AG04449 (cell line): ENCODE measurements at regions of chr1 and their contacts with region 1.

Region 1: GRCh38 chr1:7042322-7043190 is 257.3 kb downstream of the CAMTA1 start:
- DNase-seq: no peak
- H3K4me3 ChIP-seq: no peak overlapping the region
- CTCF ChIP-seq: peak; percentile 17

Region 2: GRCh38 chr1:6523566-6523965 is 519.0 kb before region 1 on chr1:
- CTCF ChIA-PET with region 1: no interaction called
- POLR2A ChIA-PET with region 1: no interaction called
- DNase-seq: no peak
- H3K4me3 ChIP-seq: no peak overlapping the region
- CTCF ChIP-seq: peak; percentile 52

Region 3: GRCh38 chr1:6547301-6547700 is 495.3 kb before region 1 on chr1:
- CTCF ChIA-PET with region 1: no interaction called
- POLR2A ChIA-PET with region 1: no interaction called
- DNase-seq: no peak
- H3K4me3 ChIP-seq: no peak overlapping the region
- CTCF ChIP-seq: no peak

Region 4: DNA sequence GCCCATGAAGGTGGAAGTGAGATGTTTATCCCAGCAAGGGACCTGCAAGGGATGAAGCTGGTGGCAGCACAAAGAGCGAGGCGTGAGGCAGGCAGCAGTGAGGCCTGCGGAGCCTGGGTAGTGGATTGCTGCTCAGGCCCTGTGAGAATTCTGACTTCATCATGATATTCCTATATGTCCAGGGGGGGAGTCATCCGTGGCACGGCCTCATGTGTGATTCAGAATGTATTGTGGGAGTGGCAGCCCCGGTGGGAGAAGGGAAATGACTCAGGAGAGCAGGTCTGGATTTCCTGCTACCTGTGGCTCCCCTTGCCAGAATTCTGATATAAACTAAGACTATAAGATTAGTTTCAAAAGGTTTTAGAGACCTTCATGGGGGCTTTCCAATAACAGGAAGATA is 16.4 kb before region 1 on chr1:
- CTCF ChIA-PET with region 1: interaction called, 35 read pairs
- POLR2A ChIA-PET with region 1: no interaction called
- DNase-seq: no peak
- H3K4me3 ChIP-seq: no peak overlapping the region
- CTCF ChIP-seq: no peak

Region 5: GRCh38 chr1:7070389-7071029 is 28.0 kb after region 1 on chr1:
- CTCF ChIA-PET with region 1: interaction called, 50 read pairs
- POLR2A ChIA-PET with region 1: no interaction called
- DNase-seq: peak; percentile 1
- H3K4me3 ChIP-seq: peak overlapping the region; percentile 44
- CTCF ChIP-seq: peak; percentile 96

Region 6: DNA sequence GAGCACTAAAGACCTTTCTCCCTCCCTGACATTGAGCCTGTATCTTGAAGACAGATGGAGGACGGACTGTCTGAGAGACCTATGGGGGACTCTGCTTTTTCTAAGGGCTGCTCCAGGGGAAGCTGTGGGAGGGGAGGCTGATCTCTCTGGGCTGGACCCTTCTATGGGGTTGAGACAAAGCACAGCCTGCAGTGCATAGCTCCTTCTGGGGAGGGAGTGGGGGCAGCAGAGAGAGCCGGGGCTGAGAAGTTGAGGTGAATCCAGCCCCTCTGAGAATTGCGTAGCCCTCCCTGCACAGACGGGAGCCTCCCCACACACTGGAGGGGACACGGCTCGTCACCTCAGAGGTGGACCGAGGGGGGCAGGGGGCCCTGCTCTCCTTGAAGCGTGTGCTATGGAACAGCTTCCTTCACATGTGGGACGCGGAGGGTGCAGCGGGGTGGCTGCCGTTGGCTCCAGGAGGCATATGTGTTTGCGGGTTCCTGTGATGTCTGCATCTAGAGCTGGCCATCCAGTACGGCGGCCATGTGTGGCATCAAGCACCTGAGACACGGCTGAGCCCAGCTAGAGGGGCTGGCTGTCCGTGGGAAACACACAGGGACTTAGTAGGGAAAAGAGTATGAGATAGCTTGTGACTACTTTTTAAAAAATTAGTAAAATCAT is 41.8 kb after region 1 on chr1:
- CTCF ChIA-PET with region 1: interaction called, 14 read pairs
- POLR2A ChIA-PET with region 1: no interaction called
- DNase-seq: no peak
- H3K4me3 ChIP-seq: no peak overlapping the region
- CTCF ChIP-seq: no peak

Region 7: GRCh38 chr1:7218210-7218832 is 175.8 kb after region 1 on chr1:
- CTCF ChIA-PET with region 1: interaction called, 46 read pairs
- POLR2A ChIA-PET with region 1: no interaction called
- DNase-seq: no peak
- H3K4me3 ChIP-seq: no peak overlapping the region
- CTCF ChIP-seq: peak; percentile 57